ENCODE measurements at regions of chr1 and their contacts with region 1.

Region 1: DNA sequence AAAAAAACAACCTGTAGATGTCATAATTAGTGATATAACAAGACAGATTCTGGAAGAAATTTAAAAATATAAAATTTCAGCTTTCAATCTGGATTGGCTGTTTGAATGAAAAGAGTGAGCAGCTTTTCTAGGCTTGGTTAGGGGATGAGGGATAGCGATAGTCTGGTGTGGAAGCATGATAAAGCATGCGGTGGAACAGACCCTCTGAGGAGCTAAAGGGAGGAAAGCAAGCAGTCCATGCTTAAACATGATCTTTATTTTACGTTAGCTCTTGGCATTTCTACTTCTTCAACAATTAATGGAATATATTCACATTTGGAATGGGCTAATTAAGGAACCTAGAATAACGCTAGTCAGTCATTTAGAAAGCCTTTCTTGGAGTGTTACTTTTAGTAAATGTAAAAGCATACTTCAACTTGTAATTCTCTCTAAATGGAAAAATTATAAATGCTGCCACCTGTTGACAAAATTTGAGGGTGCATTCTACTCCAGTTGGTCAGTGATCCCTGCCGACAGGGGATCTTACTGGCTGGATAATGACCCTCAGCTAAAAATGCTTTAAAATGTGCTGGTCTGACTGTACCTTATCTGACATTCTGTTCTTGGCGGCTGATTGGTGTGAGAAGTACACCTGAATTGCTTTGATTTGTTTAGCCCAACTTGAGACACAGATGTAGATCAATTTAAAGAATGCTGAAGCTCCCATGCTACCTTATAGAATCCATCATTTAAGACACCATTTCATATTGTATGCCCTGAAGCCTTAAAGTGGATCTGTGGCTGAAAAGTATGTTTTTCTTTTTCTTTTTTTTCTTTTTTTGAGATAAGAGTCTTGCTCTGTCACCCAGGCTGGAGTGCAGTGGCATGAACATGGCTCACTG is 61.2 kb downstream of the AK4 start:
- DNase-seq: no peak
- ATAC-seq: peak; percentile 71

Region 2: GRCh38 chr1:64864018-64864940 is 345.0 kb before region 1 on chr1:
- intact Hi-C with region 1: loop called (anchors 10 kb)
- DNase-seq: peak; percentile 85
- ATAC-seq: peak; percentile 83

Region 3: GRCh38 chr1:65059930-65060538 is 149.2 kb before region 1 on chr1:
- intact Hi-C with region 1: loop called (anchors 2 kb)
- DNase-seq: no peak
- ATAC-seq: peak; percentile 43

Region 4: GRCh38 chr1:65148548-65149350 is 60.5 kb before region 1 on chr1:
- intact Hi-C with region 1: loop called (anchors 2 kb)
- DNase-seq: peak; percentile 78
- ATAC-seq: peak; percentile 75

Region 5: GRCh38 chr1:65174585-65174984 is 34.7 kb before region 1 on chr1:
- intact Hi-C with region 1: loop called (anchors 2 kb)
- DNase-seq: peak; percentile 71
- ATAC-seq: peak; percentile 62

Region 6: GRCh38 chr1:65265651-65266351 is 56.6 kb after region 1 on chr1:
- intact Hi-C with region 1: no loop called
- DNase-seq: no peak
- ATAC-seq: peak; percentile 85